OCI-LY7 (cell line): ENCODE measurements at regions of chr12 and their contacts with region 1.

Region 1: GRCh38 chr12:107801150-107801549 is 26.6 kb downstream of the ASCL4 start:
- DNase-seq: no peak
- H3K4me3 ChIP-seq: no peak overlapping the region
- H3K27ac ChIP-seq: no peak overlapping the region
- H3K4me1 ChIP-seq: peaks cover 10% of the 10 kb centered on the region
- CTCF ChIP-seq: no peak

Region 2: DNA sequence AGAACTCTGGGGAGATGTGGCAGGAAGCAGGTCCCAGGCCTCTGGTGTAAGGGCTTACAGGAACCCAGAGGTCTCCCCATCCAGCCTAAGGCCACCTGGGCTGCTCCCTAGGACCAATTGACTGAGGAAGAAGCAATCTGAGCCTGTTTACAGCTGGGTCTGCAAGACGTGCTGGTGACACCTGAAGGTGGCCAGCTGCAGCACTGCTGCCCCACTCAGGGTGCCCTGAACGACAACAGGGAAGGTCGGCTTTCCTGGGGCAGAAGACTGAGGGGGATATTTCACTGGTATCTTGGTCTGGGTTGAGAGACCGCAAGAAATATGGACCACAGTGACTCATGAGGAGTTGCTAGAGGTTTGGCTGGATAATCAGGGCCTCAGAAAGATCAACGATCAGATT is 13.8 kb after region 1 on chr12:
- CTCF ChIA-PET with region 1: no interaction called
- POLR2A ChIA-PET with region 1: interaction called, 3 read pairs
- intact Hi-C with region 1: loop called (anchors 1 kb)
- DNase-seq: no peak
- H3K4me3 ChIP-seq: no peak overlapping the region
- H3K27ac ChIP-seq: no peak overlapping the region
- H3K4me1 ChIP-seq: no peaks in the 10 kb centered on the region
- CTCF ChIP-seq: no peak

Region 3: DNA sequence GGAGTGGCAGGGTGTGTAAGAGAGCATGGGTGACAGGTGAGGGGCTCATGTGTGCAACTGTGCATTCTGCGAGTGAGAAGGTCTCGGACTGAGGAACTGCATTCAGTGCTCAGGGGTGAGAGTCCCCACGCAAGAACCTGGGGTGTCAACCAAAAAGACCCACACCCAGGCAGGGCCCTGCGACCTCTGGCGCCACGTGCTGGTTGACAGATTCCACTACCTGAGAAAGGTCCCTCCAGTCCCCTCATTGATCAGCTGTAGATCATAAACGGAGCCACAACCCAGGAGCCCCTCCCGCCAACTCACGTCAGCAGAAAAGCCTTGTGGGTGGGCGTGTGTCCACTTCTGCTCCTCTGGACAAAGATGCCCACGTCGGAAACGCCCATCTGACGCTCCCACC is 72.1 kb after region 1 on chr12:
- CTCF ChIA-PET with region 1: no interaction called
- POLR2A ChIA-PET with region 1: no interaction called
- intact Hi-C with region 1: no loop called
- DNase-seq: no peak
- H3K4me3 ChIP-seq: no peak overlapping the region
- H3K27ac ChIP-seq: no peak overlapping the region
- H3K4me1 ChIP-seq: no peaks in the 10 kb centered on the region
- CTCF ChIP-seq: no peak

Region 4: DNA sequence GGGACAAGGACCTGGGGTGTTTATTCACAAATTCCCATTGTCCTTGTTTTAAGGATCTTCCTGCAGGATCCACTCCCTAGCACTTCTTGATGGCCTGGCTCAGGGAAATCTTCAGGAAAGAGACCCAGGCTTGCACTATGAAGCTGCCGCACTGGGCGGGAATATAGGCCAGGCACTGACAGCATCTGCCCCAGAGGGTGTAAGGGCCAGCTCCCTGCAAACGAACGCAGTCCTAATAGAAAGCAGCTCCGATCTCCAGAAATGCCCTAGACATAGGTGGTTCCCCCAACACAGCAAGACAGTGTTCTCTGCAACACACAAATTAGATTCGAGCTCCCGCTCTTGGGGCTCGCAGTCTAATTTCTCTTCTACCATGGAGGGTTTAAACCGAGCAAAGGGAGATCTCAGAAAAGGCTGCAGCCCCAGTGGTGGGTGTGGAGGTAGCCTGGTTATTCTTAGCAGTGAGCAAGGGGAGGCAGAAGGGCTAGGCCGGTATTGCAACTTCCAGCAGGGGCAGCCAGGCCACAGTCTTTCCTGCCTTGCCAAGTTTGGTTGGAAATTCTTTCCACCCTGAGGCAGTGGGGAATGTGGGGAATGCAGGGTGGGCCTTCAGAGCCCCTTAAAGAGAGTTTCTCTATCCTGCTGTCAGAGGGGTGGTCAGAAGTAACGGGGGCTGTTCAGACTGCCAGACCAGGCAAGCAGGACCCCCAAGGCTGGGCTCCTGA is 311.8 kb after region 1 on chr12:
- CTCF ChIA-PET with region 1: no interaction called
- POLR2A ChIA-PET with region 1: no interaction called
- intact Hi-C with region 1: no loop called
- DNase-seq: no peak
- H3K4me3 ChIP-seq: no peak overlapping the region
- H3K27ac ChIP-seq: no peak overlapping the region
- H3K4me1 ChIP-seq: peaks cover 5% of the 10 kb centered on the region
- CTCF ChIP-seq: no peak